Mammary epithelial cell (primary cell): ENCODE measurements at regions of chr11 and their contacts with region 1.

Region 1: GRCh38 chr11:66311965-66312548 is 4.8 kb downstream of the CD248 start:
- DNase-seq: peak; percentile 91
- H3K4me3 ChIP-seq: peak overlapping the region; percentile 61 to 63 (median 61)
- H3K27ac ChIP-seq: peak overlapping the region; percentile 54
- H3K4me1 ChIP-seq: peaks cover 4% of the 10 kb centered on the region
- H3K27me3 ChIP-seq: no peaks in the 10 kb centered on the region
- CTCF ChIP-seq: peak in 1 of 2 donors; percentile 98

Region 2: DNA sequence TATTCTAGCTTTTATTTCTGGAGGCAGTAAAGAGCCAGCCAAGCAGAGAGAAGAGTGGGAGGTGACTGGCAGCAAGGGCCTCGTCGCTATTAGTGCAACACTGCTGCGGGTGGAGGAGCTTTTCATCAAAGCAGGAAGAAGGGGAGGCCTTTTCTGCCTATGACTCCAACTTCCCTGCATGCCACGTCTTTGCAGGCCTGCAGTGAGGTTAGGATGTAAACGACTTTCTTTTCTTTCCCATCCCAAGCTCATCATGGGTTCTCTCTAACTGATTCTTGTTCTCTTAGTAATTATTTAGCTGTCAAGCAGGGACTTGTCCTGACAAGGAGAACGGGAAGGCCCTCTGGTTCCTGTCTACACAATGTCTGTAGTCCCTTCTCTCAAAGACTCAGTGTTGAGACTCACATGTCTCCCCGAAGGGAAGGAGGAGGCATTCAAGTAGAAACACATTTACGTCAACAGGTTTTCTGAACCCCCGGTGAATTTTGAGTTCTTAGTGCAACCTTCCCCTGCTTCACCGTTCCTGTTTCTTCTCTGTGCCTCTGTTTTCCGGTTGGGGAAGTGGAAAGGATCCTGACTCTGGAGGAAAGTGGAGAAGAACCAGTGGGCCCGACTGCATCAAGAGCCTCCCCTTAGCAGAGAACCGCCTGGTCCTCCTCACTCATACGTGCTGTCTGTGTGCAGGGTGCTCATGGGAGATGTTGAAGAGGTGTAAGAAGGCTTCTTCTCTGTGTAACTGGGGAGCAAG is 185.1 kb before region 1 on chr11:
- CTCF ChIA-PET with region 1: no interaction called
- dilution Hi-C with region 1: no loop called
- in situ Hi-C with region 1: no loop called
- intact Hi-C with region 1: no loop called
- DNase-seq: peak; percentile 87
- H3K4me3 ChIP-seq: peak overlapping the region in 2 of 3 experiments; percentile 0 to 4
- H3K27ac ChIP-seq: peak overlapping the region; percentile 56
- H3K4me1 ChIP-seq: peaks cover 27% of the 10 kb centered on the region
- H3K27me3 ChIP-seq: no peaks in the 10 kb centered on the region
- CTCF ChIP-seq: no peak

Region 3: DNA sequence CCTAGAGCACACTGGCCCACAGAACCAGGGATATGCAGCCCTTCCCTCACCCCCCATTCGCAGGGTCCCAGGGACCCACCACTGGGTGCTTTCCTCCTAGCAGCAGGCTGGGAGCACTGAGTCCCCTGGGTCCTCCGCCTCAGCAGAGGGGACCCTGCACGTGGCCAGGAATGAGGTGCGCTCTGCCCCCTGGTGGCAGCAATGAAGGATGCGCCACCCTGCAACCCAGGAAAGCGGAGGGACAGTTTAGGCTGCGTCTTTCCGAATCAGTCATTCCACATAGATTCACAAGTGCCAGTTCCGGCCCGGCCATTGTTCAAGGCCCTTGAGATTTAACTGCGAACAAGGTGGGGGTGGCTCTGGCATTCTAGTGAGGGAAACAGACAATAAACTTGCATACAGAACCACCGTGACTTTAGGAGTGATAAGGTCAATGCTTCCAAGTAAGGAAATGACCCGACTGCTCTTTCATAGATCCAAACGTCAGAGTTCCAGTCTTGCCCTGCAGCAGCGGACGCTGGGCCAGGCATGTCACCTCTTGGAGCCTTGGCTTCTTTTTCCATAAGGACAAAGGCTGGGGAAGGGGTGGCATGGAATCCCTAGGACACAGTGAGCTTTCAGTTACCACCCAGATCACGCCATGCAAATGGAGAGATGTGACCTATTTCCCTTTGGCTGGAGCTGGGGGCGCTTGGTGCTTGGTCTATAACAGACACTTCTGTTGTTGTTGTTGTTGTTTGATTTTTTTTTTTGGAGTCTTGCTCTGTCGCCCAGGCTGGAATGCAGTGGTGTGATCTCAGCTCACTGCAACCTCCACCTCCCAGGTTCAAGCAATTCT is 16.5 kb after region 1 on chr11:
- CTCF ChIA-PET with region 1: interaction called, 8 read pairs
- dilution Hi-C with region 1: no loop called
- in situ Hi-C with region 1: no loop called
- intact Hi-C with region 1: loop called (anchors 1 kb)
- DNase-seq: peak; percentile 45
- H3K4me3 ChIP-seq: no peak overlapping the region
- H3K27ac ChIP-seq: no peak overlapping the region
- H3K4me1 ChIP-seq: peaks cover 26% of the 10 kb centered on the region
- H3K27me3 ChIP-seq: no peaks in the 10 kb centered on the region
- CTCF ChIP-seq: peak; percentile 89 to 96

Region 4: DNA sequence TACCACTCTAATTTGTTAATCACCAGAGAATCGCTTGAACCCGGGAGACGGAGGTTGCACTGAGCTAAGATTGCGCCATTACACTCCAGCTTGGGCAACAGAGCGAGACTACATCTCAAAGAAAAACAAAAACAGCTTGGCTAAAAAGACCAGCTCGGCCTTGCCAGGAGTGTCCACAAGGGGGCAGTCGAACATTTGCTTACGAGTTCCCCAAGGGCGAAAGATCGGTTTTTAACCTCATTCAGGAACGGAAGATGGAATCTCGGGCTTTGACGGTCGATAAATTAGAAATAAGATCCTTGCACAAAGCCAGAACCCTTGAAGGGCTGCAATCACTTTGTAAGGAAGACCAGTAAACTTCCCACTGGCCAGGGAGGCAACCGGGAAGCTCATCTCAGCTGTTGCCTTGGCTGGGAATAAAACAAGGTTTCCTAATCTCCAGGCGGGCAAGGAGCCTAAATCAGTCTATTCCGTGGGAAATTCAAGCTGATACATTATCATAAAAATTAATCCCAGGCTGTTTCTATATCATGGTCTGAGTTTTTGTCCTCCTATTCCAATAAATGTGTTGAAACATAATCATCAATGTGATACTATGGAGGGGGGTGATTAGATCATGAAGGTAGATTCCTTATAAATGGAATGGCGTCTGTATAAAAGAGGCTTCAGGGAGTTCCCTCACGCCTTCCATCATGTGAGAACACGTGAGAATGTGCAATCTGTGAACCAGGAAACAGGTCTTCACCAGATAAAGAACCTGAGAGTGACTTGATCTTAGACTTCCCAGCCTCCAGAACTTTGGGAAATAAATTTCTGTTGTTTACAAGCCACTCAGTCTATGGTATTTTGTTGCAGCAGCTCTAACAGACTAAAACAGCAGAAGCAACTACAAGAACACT is 74.4 kb after region 1 on chr11:
- CTCF ChIA-PET with region 1: interaction called, 41 read pairs
- dilution Hi-C with region 1: no loop called
- in situ Hi-C with region 1: loop called (anchors 5 kb)
- intact Hi-C with region 1: loop called (anchors 1 kb)
- DNase-seq: peak; percentile 71
- H3K4me3 ChIP-seq: peak overlapping the region; percentile 20 to 31 (median 21)
- H3K27ac ChIP-seq: no peak overlapping the region
- H3K4me1 ChIP-seq: no peaks in the 10 kb centered on the region
- H3K27me3 ChIP-seq: no peaks in the 10 kb centered on the region
- CTCF ChIP-seq: peak; percentile 91 to 95

Region 5: DNA sequence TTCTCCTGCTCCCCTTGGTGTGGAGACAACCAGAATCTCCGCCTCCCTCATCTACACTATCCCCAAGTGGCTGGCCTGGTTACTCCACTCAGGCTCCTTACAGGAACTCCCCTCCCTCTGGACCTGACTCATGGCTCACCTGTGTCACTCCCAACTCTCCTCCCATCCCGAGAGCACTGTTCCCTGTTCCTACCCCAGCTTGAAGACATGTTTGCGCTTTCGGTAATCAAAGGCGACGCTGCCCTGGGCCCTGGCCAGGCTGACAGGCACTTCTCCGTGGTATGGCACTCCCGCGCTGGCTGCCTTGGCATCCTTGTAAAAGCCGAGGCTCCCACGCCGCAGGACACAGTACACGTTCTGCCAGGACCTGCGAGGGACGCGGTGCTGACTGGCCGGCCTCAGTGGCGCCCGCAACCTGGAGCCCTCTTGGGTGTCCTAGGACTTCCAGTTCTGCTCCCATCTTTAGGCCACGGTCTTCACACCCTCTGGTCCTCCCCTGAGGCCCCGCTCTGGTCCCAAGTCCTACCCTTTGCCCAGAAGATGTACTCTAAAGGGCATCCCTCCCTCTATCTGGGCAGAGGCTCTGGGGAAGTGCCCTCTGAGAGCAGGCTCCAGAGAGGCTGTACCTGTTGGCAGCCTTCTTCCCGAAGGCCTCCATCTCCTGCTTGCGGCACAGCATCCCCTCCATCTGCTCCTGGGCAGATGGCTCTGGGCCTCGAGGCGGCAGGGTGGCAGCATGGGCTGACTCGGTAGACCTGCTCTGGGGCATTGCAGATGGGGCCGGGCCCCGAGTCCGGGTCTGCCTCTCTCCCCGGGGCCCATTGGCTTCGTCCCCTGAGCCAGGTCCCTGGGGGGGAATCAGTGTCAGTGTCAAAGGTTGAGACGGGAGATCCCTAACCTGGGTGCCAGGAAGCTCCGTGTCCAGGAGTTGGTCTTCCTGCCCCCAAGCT is 375.0 kb after region 1 on chr11:
- CTCF ChIA-PET with region 1: no interaction called
- dilution Hi-C with region 1: no loop called
- in situ Hi-C with region 1: no loop called
- intact Hi-C with region 1: loop called (anchors 1 kb)
- DNase-seq: peak; percentile 88
- H3K4me3 ChIP-seq: peak overlapping the region in 2 of 3 experiments; percentile 31 to 39
- H3K27ac ChIP-seq: peak overlapping the region; percentile 90
- H3K4me1 ChIP-seq: peaks cover 26% of the 10 kb centered on the region
- H3K27me3 ChIP-seq: no peaks in the 10 kb centered on the region
- CTCF ChIP-seq: peak in 1 of 2 donors; percentile 22